ENCODE measurements at regions of chr6 and their contacts with region 1.

Region 1: DNA sequence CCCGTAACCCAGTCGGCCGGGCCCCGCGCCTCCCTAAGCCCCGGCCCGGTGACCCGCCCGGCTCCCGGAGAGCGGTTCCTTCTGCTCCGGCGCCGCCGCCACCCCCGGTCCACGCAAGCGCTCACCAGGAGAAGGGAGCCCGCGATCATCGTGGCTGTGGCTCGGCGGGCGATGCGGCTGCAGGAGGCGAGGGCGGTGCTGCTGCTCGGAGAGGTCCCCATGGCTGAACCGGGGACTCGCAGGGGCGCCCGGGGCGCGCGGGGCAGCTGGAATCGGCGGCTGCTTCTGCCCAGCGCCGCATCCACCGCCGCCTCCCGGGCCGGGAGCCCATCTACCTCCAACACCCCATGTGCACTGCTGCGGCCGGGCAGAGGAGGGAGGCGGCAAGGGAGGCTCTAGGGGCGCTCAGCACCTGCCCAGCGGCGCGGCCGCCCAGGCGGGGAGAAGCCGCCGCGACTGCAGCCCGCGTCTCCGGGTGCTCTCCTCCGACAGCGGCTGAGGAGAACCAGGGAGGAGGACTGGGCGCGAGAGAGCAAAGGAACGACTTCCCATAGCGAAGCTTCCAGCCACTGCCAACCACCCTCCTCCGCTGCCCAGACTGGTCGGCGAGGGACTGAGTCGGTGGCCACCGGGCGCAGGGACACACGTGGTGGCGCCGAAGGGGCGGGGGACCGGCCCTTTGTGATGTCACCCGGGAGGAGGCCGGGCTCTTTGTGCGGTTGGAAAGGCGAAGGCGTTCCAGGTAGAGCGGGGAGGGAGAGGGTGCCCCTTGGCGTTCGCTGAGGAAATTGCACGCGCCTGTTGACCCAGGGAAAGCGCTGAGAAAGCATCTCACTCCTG is at the start of gene TNFRSF21:
- DNase-seq: peak; percentile 97
- H3K4me3 ChIP-seq: peak within 1 kb of the TSS; percentile 72 to 86 (median 78)
- H3K27ac ChIP-seq: peak within 1 kb of the TSS; percentile 79 to 90 (median 86)
- H3K4me1 ChIP-seq: peaks cover 0 to 48% (median 42%) of the 10 kb centered on the region in 4 donors
- H3K27me3 ChIP-seq: no peaks in the 10 kb centered on the region
- CTCF ChIP-seq: peak; percentile 93 to 98 (median 98)
- EP300 ChIP-seq: no peak
- POLR2A ChIP-seq: peak; percentile 50
- total RNA-seq, gene TNFRSF21: 23.7 to 37.0 (median 30.9) TPM

Region 2: DNA sequence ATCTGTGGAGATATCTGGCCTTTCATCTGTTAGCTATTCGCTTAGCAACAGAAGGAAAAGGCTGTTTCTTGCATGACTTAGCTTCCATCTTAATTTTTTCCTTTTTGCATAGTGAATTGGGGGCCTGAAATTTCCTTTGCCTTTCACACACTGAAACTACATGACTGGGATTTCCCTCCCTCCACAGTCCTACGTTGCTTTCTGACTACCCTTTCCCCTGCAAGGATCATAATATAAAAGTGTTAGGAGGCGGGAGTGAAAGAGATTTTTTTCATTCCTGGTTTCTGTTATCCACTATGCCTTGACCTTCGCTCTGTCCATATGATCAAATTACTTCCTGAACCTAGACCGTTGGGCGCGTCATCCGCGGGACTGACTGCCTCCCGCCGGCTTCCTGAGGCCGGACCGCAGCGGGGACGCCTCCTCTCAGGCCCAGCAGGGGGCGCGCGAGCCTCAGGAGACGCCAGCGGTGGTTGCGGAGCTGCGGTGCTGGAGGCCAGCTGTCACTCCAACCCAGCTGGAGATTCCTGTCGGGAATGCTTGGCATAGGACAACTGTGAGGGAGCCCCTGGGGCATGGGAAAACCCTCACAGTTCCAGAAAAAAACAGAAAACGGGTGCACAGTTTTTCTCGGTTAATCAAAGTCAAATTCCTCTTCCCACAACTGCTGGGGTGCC is 460.7 kb before region 1 on chr6:
- intact Hi-C with region 1: loop called (anchors 2 kb)
- DNase-seq: peak; percentile 91
- H3K4me3 ChIP-seq: no peak overlapping the region
- H3K27ac ChIP-seq: no peak overlapping the region
- H3K4me1 ChIP-seq: peaks cover 5 to 13% (median 10%) of the 10 kb centered on the region in 4 donors
- H3K27me3 ChIP-seq: no peaks in the 10 kb centered on the region
- CTCF ChIP-seq: peak; percentile 90 to 99 (median 95)
- EP300 ChIP-seq: no peak
- POLR2A ChIP-seq: no peak

Region 3: DNA sequence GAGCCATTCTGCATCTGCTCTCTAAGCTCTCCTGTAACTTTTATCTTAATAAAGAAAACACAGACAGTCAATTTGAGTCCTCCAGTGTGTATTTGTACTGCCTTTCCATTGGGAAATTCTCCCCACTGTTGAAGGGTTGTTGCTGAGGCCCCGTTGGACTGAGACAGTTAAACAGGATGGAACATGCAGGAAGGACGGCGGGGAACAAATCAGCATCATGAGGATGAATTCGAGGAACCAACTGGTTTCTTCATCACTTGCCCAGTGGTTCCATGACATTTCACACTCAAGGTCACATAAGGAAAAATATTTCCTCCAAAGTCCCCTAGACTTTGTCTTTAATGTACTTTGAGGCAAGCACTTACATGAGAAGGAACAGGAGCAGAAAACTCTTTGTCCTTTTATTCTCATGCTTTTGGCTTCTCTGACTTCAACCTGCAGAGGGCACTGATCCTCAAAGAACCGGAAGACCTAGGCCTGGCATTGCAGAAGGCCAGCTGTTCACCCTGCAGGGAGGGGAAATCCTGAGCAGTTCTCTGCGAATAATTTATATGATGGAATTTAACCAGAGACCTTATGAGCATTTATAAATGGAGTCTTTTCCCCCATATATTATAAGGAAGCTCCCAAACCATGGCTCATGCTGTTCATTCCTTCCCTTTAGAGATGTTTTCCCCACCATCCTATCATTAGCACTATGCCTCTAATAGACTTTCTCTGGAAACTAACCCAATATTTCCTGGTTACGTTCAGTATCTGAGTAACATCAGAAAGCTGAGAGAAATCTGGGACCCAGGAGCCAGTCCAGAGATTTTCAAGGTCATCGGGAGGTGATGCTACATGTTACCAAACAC is 212.2 kb before region 1 on chr6:
- intact Hi-C with region 1: loop called (anchors 1 kb)
- DNase-seq: no peak
- H3K4me3 ChIP-seq: no peak overlapping the region
- H3K27ac ChIP-seq: peak overlapping the region in 2 of 4 donors; percentile 5 to 24
- H3K4me1 ChIP-seq: peaks cover 14 to 40% (median 22%) of the 10 kb centered on the region in 4 donors
- H3K27me3 ChIP-seq: no peaks in the 10 kb centered on the region
- CTCF ChIP-seq: peak; percentile 61 to 78 (median 77)
- EP300 ChIP-seq: no peak
- POLR2A ChIP-seq: no peak

Region 4: GRCh38 chr6:47146428-47147174 is 162.9 kb before region 1 on chr6:
- intact Hi-C with region 1: loop called (anchors 5 kb)
- DNase-seq: peak; percentile 60
- H3K4me3 ChIP-seq: no peak overlapping the region
- H3K27ac ChIP-seq: peak overlapping the region; percentile 48 to 65 (median 58)
- H3K4me1 ChIP-seq: peaks cover 6 to 42% (median 38%) of the 10 kb centered on the region in 4 donors
- H3K27me3 ChIP-seq: no peaks in the 10 kb centered on the region
- CTCF ChIP-seq: no peak
- EP300 ChIP-seq: no peak
- POLR2A ChIP-seq: no peak

Region 5: GRCh38 chr6:47247227-47247797 is 62.2 kb before region 1 on chr6:
- intact Hi-C with region 1: loop called (anchors 5 kb)
- DNase-seq: no peak
- H3K4me3 ChIP-seq: no peak overlapping the region
- H3K27ac ChIP-seq: peak overlapping the region in 2 of 4 donors; percentile 43
- H3K4me1 ChIP-seq: peaks cover 30 to 47% (median 43%) of the 10 kb centered on the region in 4 donors
- H3K27me3 ChIP-seq: no peaks in the 10 kb centered on the region
- CTCF ChIP-seq: no peak
- EP300 ChIP-seq: no peak
- POLR2A ChIP-seq: no peak

Measured in esophagus muscularis mucosa (tissue), 4 donors.